IMR-90 (cell line): ENCODE measurements at regions of chr20 and their contacts with region 1.

Region 1: DNA sequence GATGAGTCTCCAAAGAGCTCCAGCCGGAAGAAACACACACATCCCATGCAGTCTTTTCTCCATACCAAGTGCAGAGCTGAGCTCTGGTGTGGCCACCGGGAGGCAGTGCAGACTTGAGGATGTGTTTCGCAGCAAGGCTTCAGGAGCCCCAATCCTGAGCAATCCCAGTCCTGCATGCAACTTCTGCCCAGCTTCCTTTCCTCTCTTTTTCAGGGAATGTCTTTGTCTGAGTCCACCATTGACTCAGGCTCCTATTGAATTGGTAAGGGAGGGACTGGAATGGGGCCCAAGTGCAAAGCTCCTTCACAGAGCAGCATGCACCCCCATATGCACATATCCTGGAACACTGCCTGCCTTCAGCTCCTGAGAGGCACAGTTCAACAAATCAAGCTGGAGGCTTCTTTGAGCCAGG is 50.5 kb upstream of the ASIP start:
- DNase-seq: peak; percentile 87
- ATAC-seq: peak; percentile 100
- H3K4me3 ChIP-seq: no peak overlapping the region
- H3K27ac ChIP-seq: no peak overlapping the region
- H3K4me1 ChIP-seq: no peaks in the 10 kb centered on the region
- H3K27me3 ChIP-seq: peaks cover 54% of the 10 kb centered on the region
- CTCF ChIP-seq: peak; percentile 89
- POLR2A ChIP-seq: 0 out of 2 replicates have a peak, but pooled peaks have one; percentile 33
- RAD21 ChIP-seq: peak; percentile 95

Region 2: DNA sequence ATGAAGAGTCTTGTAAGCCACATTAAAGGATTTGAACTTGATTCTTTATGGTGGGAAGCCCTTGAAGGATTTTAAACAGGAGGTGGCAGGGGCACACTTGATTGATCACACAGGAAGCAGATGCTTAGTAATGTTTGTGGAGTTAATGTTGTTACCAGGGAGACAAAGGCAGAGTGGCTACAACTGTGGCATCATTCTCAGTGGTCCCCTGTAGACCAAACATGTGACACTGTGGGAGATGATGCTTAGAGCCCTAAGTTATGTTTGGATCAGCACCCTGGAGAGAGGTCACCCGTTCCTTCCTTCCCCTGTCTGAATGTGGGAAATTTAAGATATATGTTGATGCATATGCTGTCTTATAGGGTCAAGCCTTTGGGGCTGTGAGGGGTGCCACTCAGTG is 131.9 kb before region 1 on chr20:
- CTCF ChIA-PET with region 1: no interaction called
- POLR2A ChIA-PET with region 1: no interaction called
- dilution Hi-C with region 1: no loop called
- in situ Hi-C with region 1: no loop called
- intact Hi-C with region 1: no loop called
- DNase-seq: peak; percentile 23
- ATAC-seq: peak; percentile 63
- H3K4me3 ChIP-seq: no peak overlapping the region
- H3K27ac ChIP-seq: no peak overlapping the region
- H3K4me1 ChIP-seq: peaks cover 9% of the 10 kb centered on the region
- H3K27me3 ChIP-seq: no peaks in the 10 kb centered on the region
- CTCF ChIP-seq: no peak
- POLR2A ChIP-seq: no peak
- RAD21 ChIP-seq: no peak

Region 3: GRCh38 chr20:34249291-34249690 is 58.6 kb after region 1 on chr20:
- CTCF ChIA-PET with region 1: no interaction called
- POLR2A ChIA-PET with region 1: no interaction called
- dilution Hi-C with region 1: no loop called
- in situ Hi-C with region 1: loop called (anchors 5 kb)
- intact Hi-C with region 1: loop called (anchors 5 kb)
- DNase-seq: peak; percentile 71
- ATAC-seq: peak; percentile 68
- H3K4me3 ChIP-seq: no peak overlapping the region
- H3K27ac ChIP-seq: no peak overlapping the region
- H3K4me1 ChIP-seq: no peaks in the 10 kb centered on the region; the same call in none of the 2 replicates
- H3K27me3 ChIP-seq: no peaks in the 10 kb centered on the region
- CTCF ChIP-seq: no peak
- POLR2A ChIP-seq: no peak
- RAD21 ChIP-seq: no peak

Region 4: GRCh38 chr20:34282041-34282440 is 91.4 kb after region 1 on chr20:
- CTCF ChIA-PET with region 1: no interaction called
- POLR2A ChIA-PET with region 1: no interaction called
- dilution Hi-C with region 1: no loop called
- in situ Hi-C with region 1: loop called (anchors 10 kb)
- intact Hi-C with region 1: no loop called
- DNase-seq: no peak
- ATAC-seq: no peak
- H3K4me3 ChIP-seq: no peak overlapping the region
- H3K27ac ChIP-seq: no peak overlapping the region
- H3K4me1 ChIP-seq: no peaks in the 10 kb centered on the region
- H3K27me3 ChIP-seq: no peaks in the 10 kb centered on the region
- CTCF ChIP-seq: no peak
- POLR2A ChIP-seq: no peak
- RAD21 ChIP-seq: no peak

Region 5: DNA sequence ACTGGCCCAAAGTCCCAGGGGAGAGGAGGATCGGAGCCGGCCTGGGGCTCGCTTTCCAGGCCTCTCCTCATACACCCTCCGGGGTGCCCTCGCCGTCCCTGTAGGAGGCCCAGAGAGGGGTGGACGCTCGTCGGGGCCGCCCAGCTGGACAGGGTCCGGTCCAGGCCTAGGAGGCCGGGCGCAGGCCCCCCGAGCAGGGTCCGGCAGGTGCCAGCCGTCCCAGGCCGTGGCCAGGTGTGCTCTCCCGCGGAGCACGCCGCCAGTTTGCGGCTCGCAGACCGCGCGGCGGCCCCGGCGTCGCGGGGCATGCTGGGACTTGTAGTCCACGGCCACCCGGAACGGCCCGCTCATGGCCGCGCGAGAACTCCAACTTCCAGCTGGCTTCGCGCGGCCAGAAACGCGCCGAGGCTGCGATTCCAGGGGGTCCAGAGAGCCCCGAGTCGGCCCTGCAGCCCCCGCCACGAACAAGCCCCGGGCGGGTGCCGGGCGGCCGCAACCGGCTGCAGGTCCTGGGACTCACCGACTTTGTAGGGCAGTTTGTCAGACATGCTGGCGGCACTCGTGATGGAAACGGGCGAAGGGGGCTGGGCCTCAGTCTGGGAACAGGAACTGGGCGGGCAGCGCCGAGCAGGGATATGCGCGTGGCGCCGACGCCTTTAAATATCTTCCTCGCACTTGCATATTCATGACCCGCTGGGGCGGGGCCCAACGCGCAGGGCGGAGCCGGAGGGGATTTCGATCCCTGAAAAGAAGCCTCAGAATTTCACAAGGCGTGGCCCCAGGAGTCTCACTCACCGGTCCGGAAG is 112.2 kb after region 1 on chr20 and contains the start of gene AHCY:
- CTCF ChIA-PET with region 1: interaction called, 3 read pairs
- POLR2A ChIA-PET with region 1: no interaction called
- dilution Hi-C with region 1: no loop called
- in situ Hi-C with region 1: no loop called
- intact Hi-C with region 1: loop called (anchors 2 kb)
- DNase-seq: peak; percentile 95
- ATAC-seq: peak; percentile 95
- H3K4me3 ChIP-seq: peak within 1 kb of the TSS; percentile 76
- H3K27ac ChIP-seq: peak within 1 kb of the TSS; percentile 80
- H3K4me1 ChIP-seq: peaks cover 9% of the 10 kb centered on the region
- H3K27me3 ChIP-seq: no peaks in the 10 kb centered on the region
- CTCF ChIP-seq: no peak
- POLR2A ChIP-seq: no peak
- RAD21 ChIP-seq: no peak
- total RNA-seq, gene AHCY: 194 and 210 TPM in 2 replicates

Region 6: DNA sequence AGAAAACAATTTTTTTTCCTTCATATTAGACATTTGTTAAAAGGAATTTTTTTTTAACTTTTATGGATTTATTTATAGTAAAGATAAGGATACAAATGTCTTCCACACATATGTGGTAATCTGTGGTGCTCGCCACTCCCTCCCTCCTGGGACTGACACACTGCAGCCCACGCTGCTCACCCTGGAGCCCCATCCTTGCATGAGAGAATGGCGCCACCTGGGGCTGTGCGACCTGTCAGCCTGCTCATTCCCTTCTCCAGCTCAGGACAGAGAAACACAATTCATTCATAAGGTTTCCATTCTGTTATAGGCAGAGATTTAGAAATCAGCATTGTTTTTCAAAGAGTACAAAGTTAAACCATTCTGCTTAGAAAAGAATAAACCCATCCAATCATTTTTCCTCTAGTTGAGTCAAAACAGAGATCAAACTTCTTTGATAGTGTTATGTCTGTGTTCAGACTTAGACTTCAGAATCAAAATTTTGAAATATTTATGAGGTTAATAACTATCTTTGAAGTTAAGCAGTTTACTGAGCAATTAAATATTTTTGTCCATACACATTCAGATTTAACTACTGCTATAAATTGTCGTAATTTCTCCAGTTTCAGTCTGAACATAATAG is 282.7 kb after region 1 on chr20:
- CTCF ChIA-PET with region 1: no interaction called
- POLR2A ChIA-PET with region 1: no interaction called
- dilution Hi-C with region 1: no loop called
- in situ Hi-C with region 1: no loop called
- intact Hi-C with region 1: loop called (anchors 10 kb)
- DNase-seq: peak; percentile 66
- ATAC-seq: peak; percentile 60
- H3K4me3 ChIP-seq: no peak overlapping the region
- H3K27ac ChIP-seq: no peak overlapping the region
- H3K4me1 ChIP-seq: peaks cover 2% of the 10 kb centered on the region; the same call in 1 of the 2 replicates
- H3K27me3 ChIP-seq: no peaks in the 10 kb centered on the region
- CTCF ChIP-seq: peak; percentile 46
- POLR2A ChIP-seq: no peak
- RAD21 ChIP-seq: peak; percentile 51; the same call in 1 of the 2 replicates